Ovary (tissue), 10 donors: ENCODE measurements at regions of chr11 and their contacts with region 1.

Region 1: GRCh38 chr11:65013692-65014145 is 241 bp upstream of the ARL2 start:
- DNase-seq: peak; percentile 92 to 95 (median 93)
- H3K4me3 ChIP-seq: peak overlapping the region; percentile 56
- H3K27ac ChIP-seq: peak overlapping the region; percentile 94 to 99
- H3K4me1 ChIP-seq: peaks cover 2% of the 10 kb centered on the region
- H3K27me3 ChIP-seq: no peaks in the 10 kb centered on the region
- CTCF ChIP-seq: peak in 2 of 3 donors; percentile 77 to 82
- EP300 ChIP-seq: no peak
- POLR2A ChIP-seq: peak; percentile 58

Region 2: DNA sequence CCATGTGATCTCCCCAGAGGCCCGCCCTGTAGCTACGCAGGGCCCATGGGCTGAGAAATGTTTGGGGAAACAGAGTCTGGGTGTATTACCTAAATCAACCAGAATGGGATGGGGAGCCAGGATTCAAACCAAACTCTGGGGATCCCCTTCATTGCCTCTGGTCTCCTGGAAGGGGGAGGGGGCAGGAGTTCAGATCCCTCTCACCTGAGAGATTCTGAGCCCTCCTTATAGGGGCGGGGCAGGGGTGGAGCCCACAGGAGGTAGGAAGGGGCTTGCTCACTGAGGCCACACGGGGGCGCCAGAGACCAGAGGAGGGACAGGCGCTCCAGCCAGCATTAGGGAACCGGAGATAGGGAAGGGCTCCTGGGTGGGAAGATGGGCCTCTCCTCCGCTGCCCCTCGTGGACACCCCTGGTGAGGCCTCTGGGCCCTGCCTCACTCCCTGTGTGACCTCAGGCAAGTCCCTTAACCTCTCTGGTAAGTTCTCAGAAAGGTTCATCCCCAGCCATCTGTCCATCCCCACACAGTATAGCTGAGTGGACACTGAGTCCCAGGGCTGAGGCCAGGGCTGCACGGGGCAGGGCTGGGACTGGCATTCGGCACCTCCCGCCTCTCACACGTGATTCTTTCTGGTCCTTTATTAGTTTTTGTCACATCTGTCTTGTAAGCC is 166.6 kb before region 1 on chr11:
- intact Hi-C with region 1: loop called (anchors 10 kb)
- DNase-seq: peak; percentile 91 to 96 (median 93)
- H3K4me3 ChIP-seq: no peak overlapping the region
- H3K27ac ChIP-seq: no peak overlapping the region
- H3K4me1 ChIP-seq: peaks cover 7% of the 10 kb centered on the region
- H3K27me3 ChIP-seq: no peaks in the 10 kb centered on the region
- CTCF ChIP-seq: peak; percentile 94 to 98 (median 96)
- EP300 ChIP-seq: no peak
- POLR2A ChIP-seq: no peak

Region 3: GRCh38 chr11:64924102-64924851 is 89.4 kb before region 1 on chr11 and contains the start of gene PPP2R5B:
- intact Hi-C with region 1: loop called in 1 of 4 experiments (anchors 1 kb)
- DNase-seq: peak; percentile 89 to 95 (median 92)
- H3K4me3 ChIP-seq: peak within 1 kb of the TSS; percentile 98
- H3K27ac ChIP-seq: peak within 1 kb of the TSS; percentile 63 to 89
- H3K4me1 ChIP-seq: no peaks in the 10 kb centered on the region
- H3K27me3 ChIP-seq: no peaks in the 10 kb centered on the region
- CTCF ChIP-seq: peak in 1 of 3 donors; percentile 11
- EP300 ChIP-seq: peak; percentile 18
- POLR2A ChIP-seq: peak; percentile 81
- total RNA-seq, gene PPP2R5B: 9.0 to 12.8 (median 12.2) TPM

Region 4: DNA sequence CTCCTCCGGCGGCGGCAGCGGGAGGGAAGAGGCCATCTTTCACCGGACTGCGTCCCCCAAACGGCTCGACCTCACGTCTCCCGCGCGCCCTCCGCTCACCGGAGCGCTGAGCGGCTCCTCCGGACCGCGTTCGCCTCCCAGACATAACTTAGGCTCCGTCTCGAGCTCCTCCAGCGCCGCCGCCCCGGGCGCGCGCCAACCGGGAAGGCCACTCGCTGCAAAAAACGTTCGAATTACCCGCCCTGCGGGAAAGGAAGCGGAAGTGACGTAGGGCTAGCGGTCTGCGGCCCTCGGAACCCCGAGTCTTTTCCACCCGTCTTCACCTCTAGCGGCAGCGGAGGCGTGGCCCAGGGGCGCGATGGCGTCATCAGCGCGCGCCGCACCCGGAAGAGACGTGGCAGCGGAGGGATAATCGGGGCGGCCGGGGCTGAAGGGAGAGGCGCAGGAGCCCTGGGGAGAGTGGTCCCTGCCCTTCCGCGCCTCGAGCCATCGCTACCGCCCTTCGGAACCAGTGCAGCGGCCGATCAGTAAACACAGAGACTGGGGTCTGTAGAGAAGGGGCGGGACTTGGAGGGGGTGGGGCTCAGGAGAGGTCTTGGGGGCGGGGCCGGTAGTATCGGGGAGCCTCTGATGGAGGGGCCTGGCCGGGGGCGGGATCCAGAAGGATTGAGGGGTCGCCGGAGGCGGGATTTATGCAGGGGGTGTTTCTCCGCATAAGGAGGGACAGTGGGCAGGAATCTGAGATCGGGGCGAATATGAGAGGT is 70.3 kb after region 1 on chr11 and contains the starts of genes CDCA5 and ZFPL1:
- intact Hi-C with region 1: loop called in 1 of 4 experiments (anchors 5 kb)
- DNase-seq: peak; percentile 92 to 97 (median 95)
- H3K4me3 ChIP-seq: peak within 1 kb of the TSS; percentile 77
- H3K27ac ChIP-seq: peak within 1 kb of the TSS; percentile 75 to 86
- H3K4me1 ChIP-seq: peaks cover 7% of the 10 kb centered on the region
- H3K27me3 ChIP-seq: no peaks in the 10 kb centered on the region
- CTCF ChIP-seq: no peak
- EP300 ChIP-seq: peak; percentile 18
- POLR2A ChIP-seq: peak; percentile 75
- total RNA-seq, gene CDCA5: 0.38 to 2.8 (median 0.52) TPM in 6 of 7 donors, not detected in the other
- total RNA-seq, gene ZFPL1: 30.5 to 41.6 (median 35.1) TPM

Region 5: GRCh38 chr11:65095974-65096806 is 82.5 kb after region 1 on chr11 and contains the start of gene VPS51:
- intact Hi-C with region 1: loop called in 2 of 4 experiments (anchors 5 kb)
- DNase-seq: peak; percentile 84 to 90 (median 88)
- H3K4me3 ChIP-seq: peak within 1 kb of the TSS; percentile 91
- H3K27ac ChIP-seq: peak within 1 kb of the TSS; percentile 60 to 86
- H3K4me1 ChIP-seq: peaks cover 8% of the 10 kb centered on the region
- H3K27me3 ChIP-seq: no peaks in the 10 kb centered on the region
- CTCF ChIP-seq: peak in 1 of 3 donors; percentile 50
- EP300 ChIP-seq: no peak
- POLR2A ChIP-seq: peak; percentile 78
- total RNA-seq, gene VPS51: 149 to 543 (median 231) TPM

Region 6: GRCh38 chr11:65111744-65112414 is 98.2 kb after region 1 on chr11 and contains the start of gene TM7SF2:
- intact Hi-C with region 1: loop called in 3 of 4 experiments (anchors 5 to 10 kb)
- DNase-seq: peak; percentile 95 to 98 (median 97)
- H3K4me3 ChIP-seq: peak within 1 kb of the TSS; percentile 51
- H3K27ac ChIP-seq: peak within 1 kb of the TSS; percentile 32 to 56
- H3K4me1 ChIP-seq: peaks cover 16% of the 10 kb centered on the region
- H3K27me3 ChIP-seq: no peaks in the 10 kb centered on the region
- CTCF ChIP-seq: no peak
- EP300 ChIP-seq: no peak
- POLR2A ChIP-seq: peak; percentile 95
- total RNA-seq, gene TM7SF2: 30.0 to 170 (median 63.6) TPM

Region 7: DNA sequence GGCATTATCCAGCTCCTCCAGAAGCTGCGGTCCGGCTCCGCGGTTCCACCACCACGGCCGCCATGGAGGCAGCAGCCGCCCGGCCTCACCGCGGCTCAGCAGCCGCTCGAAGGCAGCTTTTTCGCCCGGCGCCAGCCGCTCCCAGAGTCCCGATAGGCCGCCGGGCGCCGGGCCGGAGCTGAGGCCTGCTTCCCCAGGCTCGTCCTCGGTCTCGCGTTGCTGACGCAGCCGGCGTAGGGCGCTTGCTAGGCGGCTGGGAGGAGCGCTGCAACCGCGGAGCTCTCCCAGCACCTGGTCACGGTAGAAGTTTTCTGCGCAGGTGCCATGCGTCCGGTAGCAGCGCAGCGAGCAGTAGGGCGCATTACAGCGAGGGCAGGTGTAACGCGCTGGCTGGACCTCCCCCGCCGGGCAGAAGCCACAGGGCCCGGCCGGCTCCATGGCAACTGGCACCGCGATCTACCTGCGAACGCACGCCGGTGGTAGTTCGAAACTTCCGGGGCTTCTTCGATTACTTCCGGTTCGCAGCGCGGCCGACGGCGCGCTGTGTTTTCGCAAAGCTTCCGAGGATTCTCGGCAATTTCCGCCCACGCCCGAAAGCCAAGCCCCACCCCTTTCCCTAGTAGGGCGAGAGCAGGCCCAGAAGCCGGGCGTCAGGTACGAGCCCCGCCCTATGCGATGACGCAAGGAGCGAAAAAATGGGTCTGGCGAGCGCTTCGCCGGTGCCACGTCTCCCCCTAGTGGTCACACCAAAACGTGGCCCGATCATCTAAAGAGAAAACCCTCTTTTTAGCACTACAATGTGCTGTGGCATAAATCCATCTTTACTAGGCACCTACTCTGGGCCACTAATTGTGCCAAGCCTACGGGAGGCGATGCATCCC is 103.7 kb after region 1 on chr11 and contains the start of gene ZNHIT2:
- intact Hi-C with region 1: loop called (anchors 5 to 10 kb)
- DNase-seq: peak; percentile 99 to 100 (median 100)
- H3K4me3 ChIP-seq: peak within 1 kb of the TSS; percentile 70
- H3K27ac ChIP-seq: peak within 1 kb of the TSS; percentile 27 to 70
- H3K4me1 ChIP-seq: peaks cover 9% of the 10 kb centered on the region
- H3K27me3 ChIP-seq: no peaks in the 10 kb centered on the region
- CTCF ChIP-seq: peak; percentile 95 to 99 (median 98)
- EP300 ChIP-seq: peak; percentile 13
- POLR2A ChIP-seq: peak; percentile 64
- total RNA-seq, gene ZNHIT2: 10.0 to 33.7 (median 13.4) TPM

Region 8: DNA sequence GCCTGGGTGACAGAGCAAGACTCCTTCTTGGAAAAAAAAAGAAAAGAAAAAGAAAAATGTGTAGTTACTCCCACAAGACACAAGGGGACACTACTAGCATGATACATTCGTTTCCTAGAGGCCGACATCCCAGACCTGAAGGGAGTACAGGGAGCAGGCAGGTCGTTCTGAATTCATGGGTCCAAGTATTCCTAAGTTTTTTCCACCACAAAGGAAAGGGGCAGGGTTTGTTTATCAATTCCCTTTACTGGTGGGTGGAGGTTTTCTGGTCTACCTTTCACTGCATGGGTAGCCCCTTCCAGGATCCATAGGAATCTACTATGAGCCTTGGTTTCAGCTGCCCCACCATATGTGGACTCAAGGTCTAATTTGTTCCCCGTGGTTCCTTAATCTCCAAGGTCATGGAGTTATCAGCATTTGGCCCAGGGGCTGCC is 352.6 kb after region 1 on chr11:
- intact Hi-C with region 1: no loop called
- DNase-seq: peak in 1 of 5 donors; percentile 49
- H3K4me3 ChIP-seq: no peak overlapping the region
- H3K27ac ChIP-seq: no peak overlapping the region
- H3K4me1 ChIP-seq: peaks cover 5% of the 10 kb centered on the region
- H3K27me3 ChIP-seq: no peaks in the 10 kb centered on the region
- CTCF ChIP-seq: peak; percentile 73 to 93 (median 88)
- EP300 ChIP-seq: no peak
- POLR2A ChIP-seq: no peak

Region 9: GRCh38 chr11:65652511-65653231 is 639.0 kb after region 1 on chr11:
- intact Hi-C with region 1: no loop called
- DNase-seq: peak; percentile 95 to 98 (median 97)
- H3K4me3 ChIP-seq: peak overlapping the region; percentile 63
- H3K27ac ChIP-seq: peak overlapping the region; percentile 74 to 98
- H3K4me1 ChIP-seq: peaks cover 18% of the 10 kb centered on the region
- H3K27me3 ChIP-seq: no peaks in the 10 kb centered on the region
- CTCF ChIP-seq: peak in 2 of 3 donors; percentile 9 to 22
- EP300 ChIP-seq: no peak
- POLR2A ChIP-seq: peak; percentile 70